ENCODE measurements at regions of chr14 and their contacts with region 1.

Region 1: DNA sequence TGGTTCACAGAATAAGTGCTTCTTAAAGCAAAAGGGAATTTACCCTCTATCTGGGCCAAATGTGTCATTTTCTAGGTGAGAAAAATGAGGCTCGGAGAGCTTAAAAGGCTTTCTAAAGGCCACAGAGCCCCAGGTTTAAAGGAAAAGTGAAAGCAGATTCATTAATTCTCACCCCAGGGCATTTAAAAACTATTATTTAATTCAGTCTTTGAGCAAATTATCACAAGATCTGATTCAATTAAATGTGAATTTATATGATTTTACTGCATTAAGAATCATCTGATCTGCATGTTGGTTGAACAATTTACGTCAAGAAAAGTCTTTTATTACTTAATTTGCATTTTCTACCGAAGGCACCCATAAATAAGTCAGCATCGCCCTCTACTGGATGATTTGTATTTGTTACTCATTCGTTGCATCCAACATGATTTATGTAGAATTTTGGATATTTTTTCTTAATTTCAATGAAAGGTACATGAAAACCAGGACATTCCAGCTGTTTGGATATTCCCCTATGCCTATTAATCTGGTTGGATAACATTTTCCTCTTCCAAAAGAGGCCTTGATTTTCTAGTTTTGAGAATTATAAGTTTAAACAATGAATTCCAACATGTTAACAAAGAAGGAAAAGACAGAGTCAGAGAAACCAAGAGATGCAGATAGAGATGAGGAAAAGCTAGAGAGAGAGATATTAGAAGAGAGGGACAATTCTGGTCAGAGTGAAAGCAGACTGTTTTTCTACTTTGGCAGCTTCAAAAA is 19.1 kb upstream of the DHRS7 start:
- DNase-seq: no peak
- ATAC-seq: peak; percentile 64
- H3K4me3 ChIP-seq: peak overlapping the region; percentile 52
- H3K27ac ChIP-seq: peak overlapping the region; percentile 64
- H3K4me1 ChIP-seq: peaks cover 6% of the 10 kb centered on the region
- H3K27me3 ChIP-seq: no peaks in the 10 kb centered on the region
- CTCF ChIP-seq: peak; percentile 78

Region 2: DNA sequence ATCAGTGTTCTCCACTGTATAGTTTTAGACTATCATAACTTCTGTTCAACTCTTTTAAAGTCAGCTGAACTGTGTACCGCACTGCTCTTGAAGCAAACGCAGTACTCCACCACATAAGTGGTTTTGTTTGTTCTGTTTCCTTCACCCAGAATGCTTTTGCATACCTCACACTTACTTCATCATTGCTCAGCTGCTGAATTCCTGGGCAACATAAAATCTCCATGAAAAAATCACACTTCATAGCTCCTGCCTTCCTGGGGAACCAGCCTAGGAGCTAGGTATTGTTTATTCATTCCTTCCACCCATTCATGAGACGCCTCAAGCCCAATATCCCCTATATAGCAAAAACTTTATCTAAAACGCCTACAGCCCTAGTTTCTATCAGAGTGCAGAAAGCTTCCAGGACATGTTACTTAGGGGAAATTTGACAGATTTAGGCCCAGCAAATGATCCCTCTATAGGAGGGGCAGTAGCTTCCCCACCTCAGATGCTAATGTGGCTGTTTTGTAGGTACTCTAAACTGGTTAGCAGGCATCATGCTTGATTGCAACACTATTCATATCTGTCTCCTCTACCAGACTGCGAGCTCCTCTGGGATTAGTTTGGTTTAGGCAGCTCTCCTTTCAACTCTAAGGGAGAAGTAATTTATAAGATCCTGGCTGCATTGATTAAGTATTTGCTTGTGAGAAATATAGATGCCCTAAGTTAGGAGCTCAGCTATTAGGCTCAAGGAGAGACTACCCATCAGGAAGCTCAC is 219.9 kb before region 1 on chr14:
- intact Hi-C with region 1: loop called (anchors 10 kb)
- DNase-seq: no peak
- ATAC-seq: peak; percentile 66
- H3K4me3 ChIP-seq: no peak overlapping the region
- H3K27ac ChIP-seq: no peak overlapping the region
- H3K4me1 ChIP-seq: no peaks in the 10 kb centered on the region
- H3K27me3 ChIP-seq: no peaks in the 10 kb centered on the region
- CTCF ChIP-seq: no peak

Region 3: GRCh38 chr14:60064491-60065072 is 119.7 kb before region 1 on chr14:
- intact Hi-C with region 1: loop called (anchors 10 kb)
- DNase-seq: no peak
- ATAC-seq: peak; percentile 41
- H3K4me3 ChIP-seq: no peak overlapping the region
- H3K27ac ChIP-seq: no peak overlapping the region
- H3K4me1 ChIP-seq: no peaks in the 10 kb centered on the region
- H3K27me3 ChIP-seq: no peaks in the 10 kb centered on the region
- CTCF ChIP-seq: peak; percentile 67

Measured in upper lobe of right lung (tissue), 1 donor.